Naive thymus-derived CD8-positive, alpha-beta T cell (primary cell): ENCODE measurements at regions of chr6 and their contacts with region 1.

Region 1: DNA sequence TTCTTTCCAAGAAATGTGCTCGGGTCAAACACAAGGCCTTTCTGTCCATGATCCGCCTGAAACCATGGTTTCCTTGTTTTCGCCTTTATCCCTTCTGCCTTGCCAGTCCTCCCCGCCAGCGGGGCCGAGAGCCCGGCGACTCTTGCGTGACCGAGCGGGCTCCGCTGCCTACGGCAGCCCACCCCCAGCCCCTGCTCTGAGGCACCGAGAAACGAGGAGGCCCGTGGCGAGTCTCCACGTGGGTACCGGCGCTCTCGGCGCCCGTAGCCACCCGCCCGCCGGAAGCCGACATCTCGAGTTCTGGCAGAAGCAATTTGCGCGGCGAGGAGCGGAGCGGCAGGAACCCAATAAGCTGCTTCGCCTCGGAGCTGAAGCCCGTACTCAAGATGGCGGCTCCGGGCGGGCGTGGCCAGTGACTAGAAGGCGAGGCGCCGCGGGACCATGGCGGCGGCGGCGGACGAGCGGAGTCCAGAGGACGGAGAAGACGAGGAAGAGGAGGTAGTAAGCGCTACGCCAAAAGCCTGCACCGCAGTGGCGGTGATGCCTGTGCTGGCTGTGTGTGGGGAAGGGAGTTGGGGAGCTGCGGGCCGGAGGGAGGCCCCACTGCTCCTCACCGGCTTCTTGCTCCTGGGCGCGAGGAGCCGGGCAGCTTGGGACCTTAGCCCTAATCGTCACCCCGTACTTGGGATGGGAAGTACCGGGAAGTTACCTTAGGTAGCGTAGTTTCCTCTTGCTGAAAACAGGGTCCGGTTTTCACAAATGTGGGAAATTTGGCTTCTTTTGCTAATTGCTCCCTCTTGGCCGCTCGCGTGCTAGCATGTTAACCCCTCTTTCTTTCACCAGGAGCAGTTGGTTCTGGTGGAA is at the start of gene GTF3C6:
- DNase-seq: peak; percentile 84 to 95 (median 90)
- ATAC-seq: peak; percentile 99
- H3K4me3 Mint-ChIP-seq: peak within 1 kb of the TSS; percentile 96 to 99 (median 98)
- H3K27ac Mint-ChIP-seq: peak within 1 kb of the TSS; percentile 97 to 100 (median 98)
- H3K4me1 Mint-ChIP-seq: peaks cover 9 to 24% (median 20%) of the 10 kb centered on the region in 4 donors
- H3K27me3 Mint-ChIP-seq: peaks cover 0 to 4% (median 3%) of the 10 kb centered on the region in 5 donors
- polyA plus RNA-seq, gene GTF3C6: 93.4 to 100 (median 98.5) TPM

Region 2: DNA sequence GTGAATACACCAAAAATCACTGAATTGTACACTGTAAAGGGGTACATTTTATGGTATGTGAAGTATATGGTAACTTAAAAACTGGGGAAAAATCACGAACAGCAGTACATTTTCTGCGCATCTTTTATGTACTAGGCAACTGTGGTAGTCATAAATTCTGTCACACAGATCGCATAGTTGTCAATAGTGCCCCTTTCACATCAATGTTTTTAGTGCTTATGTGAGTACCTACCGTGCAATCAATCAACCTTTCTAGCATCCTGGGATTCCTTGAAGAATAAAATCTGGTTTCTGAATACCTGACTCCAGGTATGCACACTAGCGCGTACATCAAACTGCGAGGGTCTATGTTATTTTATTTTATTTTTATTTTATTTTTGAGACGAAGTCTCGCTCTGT is 22.6 kb after region 1 on chr6:
- POLR2A ChIA-PET with region 1: interaction called, 53 read pairs
- DNase-seq: peak in 1 of 10 donors; percentile 32
- ATAC-seq: no peak
- H3K4me3 Mint-ChIP-seq: peak overlapping the region; percentile 93 to 99 (median 98)
- H3K27ac Mint-ChIP-seq: peak overlapping the region; percentile 95 to 100 (median 99)
- H3K4me1 Mint-ChIP-seq: peaks cover 20 to 44% (median 43%) of the 10 kb centered on the region in 4 donors
- H3K27me3 Mint-ChIP-seq: no peaks in the 10 kb centered on the region